ENCODE measurements at regions of chr16 and their contacts with region 1.

Region 1: DNA sequence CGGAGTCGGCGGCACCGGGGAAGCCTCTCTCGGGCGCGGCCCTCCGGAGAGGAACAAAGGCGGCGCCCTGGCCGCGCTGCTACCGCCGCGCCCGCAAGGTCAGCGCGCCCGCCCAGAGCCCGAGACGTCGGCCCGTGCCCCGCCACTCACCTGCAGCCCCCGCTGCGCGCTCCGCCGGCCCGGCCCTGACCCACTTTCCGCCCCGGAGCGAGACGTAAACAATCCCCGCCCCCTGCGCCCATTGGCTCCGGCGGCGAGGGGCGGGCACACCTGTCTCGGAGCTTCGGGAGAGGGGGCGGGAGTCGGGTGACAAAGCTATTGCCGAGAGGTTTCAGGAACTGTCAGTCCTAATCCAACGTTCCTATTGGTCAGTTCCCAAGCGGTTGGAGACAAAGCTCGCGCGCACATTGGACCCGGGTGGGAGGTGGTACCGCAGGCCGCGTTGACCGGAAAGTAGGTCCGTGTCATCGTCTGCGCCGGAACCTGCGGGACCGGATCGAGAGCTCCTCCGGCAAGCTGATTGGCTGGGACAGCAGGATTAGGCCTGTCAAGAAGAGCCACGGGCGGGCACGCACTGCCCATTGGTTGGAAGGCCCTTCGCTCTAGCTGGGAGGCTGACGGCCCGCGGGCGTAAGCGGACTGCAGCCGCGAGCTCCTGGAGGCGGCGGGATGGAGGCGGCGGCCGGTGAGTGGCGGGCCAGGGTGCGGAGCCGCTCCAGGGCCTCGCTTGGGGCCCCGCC is at the starts of genes NUBP2 and SPSB3:
- DNase-seq: peak; percentile 100
- H3K4me3 ChIP-seq: peak within 1 kb of the TSS; percentile 66 to 94 (median 85)
- H3K4me3 Mint-ChIP-seq: peak within 1 kb of the TSS; percentile 87 to 93
- H3K27ac ChIP-seq: peak within 1 kb of the TSS; percentile 52 to 83
- H3K27ac Mint-ChIP-seq: peak within 1 kb of the TSS; percentile 82 to 95 (median 86)
- H3K4me1 ChIP-seq: peaks cover 25 to 33% of the 10 kb centered on the region in 2 donors
- H3K4me1 Mint-ChIP-seq: peaks cover 27% of the 10 kb centered on the region
- H3K27me3 ChIP-seq: no peaks in the 10 kb centered on the region
- H3K27me3 Mint-ChIP-seq: no peaks in the 10 kb centered on the region
- CTCF ChIP-seq: no peak
- polyA plus RNA-seq, gene NUBP2: 34.4 to 69.5 (median 57.9) TPM
- polyA plus RNA-seq, gene SPSB3: 36.8 to 151 (median 40.2) TPM

Region 2: GRCh38 chr16:1428511-1428910 is 354.0 kb before region 1 on chr16:
- intact Hi-C with region 1: loop called in 1 of 2 experiments (anchors 10 kb)
- DNase-seq: peak; percentile 34 to 51 (median 38)
- H3K4me3 ChIP-seq: no peak overlapping the region
- H3K4me3 Mint-ChIP-seq: peak overlapping the region; percentile 27 to 67
- H3K27ac ChIP-seq: no peak overlapping the region
- H3K27ac Mint-ChIP-seq: no peak overlapping the region
- H3K4me1 ChIP-seq: peaks cover 5 to 20% of the 10 kb centered on the region in 2 donors
- H3K4me1 Mint-ChIP-seq: peaks cover 3% of the 10 kb centered on the region
- H3K27me3 ChIP-seq: peaks cover 0 to 24% of the 10 kb centered on the region in 2 donors
- H3K27me3 Mint-ChIP-seq: peaks cover 7 to 34% (median 7%) of the 10 kb centered on the region in 3 donors
- CTCF ChIP-seq: peak; percentile 80

Region 3: DNA sequence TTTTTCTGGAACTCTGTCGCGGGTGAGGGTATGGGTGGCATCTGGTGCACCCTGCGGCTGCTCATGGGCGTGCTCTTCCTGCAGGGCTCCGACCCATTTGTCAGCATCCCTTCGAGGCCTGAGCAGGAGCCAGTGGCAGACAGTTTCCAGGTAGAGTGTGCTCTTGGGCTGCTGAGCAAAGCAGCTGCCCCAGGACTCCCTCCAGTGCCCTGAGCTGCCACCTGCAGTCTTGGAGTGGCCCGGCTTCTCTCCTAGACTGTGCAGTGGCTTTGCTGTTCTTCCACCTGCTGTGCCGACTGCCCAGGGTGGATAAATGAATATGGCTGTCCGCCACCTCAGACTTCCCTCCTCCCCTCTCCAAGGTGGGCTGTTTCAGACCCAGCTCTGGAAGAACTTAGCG is 115.3 kb before region 1 on chr16:
- intact Hi-C with region 1: no loop called
- DNase-seq: no peak
- H3K4me3 ChIP-seq: no peak overlapping the region
- H3K4me3 Mint-ChIP-seq: no peak overlapping the region
- H3K27ac ChIP-seq: no peak overlapping the region
- H3K27ac Mint-ChIP-seq: no peak overlapping the region
- H3K4me1 ChIP-seq: no peaks in the 10 kb centered on the region
- H3K4me1 Mint-ChIP-seq: no peaks in the 10 kb centered on the region
- H3K27me3 ChIP-seq: no peaks in the 10 kb centered on the region
- H3K27me3 Mint-ChIP-seq: peaks cover 0 to 1% (median 1%) of the 10 kb centered on the region in 3 donors
- CTCF ChIP-seq: no peak

Region 4: DNA sequence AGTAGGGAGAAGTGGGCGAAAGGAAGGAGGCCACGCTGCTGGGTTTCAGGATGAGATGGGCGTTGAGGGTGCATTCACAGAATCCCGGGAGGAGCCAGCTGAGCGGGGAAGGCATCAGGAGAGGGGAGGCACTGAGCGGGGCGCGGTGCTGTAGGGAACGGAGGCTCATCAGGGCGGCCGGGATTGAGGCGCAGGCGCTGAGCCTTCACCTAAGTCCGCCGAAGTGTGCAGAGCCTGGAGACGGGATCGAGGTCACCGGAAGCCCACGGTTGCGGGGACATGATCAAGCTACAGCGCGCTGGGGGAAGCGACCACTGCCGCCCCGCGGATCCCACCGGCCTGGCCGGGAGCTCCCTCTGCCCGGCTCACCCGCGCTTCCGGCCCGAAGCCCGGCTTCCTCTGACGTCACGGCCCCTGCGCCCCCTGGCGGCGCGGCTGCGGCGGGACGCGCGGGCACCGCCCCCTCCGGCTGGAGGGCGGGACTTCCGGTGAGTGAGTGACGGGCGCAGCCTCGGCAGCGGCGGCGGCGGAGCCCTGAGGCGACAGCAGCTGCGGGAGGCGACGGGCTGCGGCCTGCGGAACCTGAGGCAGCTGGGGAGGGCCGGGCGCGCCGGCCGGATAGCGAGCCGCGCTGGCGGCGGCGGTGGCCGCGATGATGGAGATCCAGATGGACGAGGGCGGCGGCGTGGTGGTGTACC is 76.7 kb before region 1 on chr16 and contains the start of gene MAPK8IP3:
- intact Hi-C with region 1: loop called (anchors 10 kb)
- DNase-seq: peak; percentile 86 to 92 (median 87)
- H3K4me3 ChIP-seq: peak within 1 kb of the TSS; percentile 94 to 97 (median 96)
- H3K4me3 Mint-ChIP-seq: peak within 1 kb of the TSS; percentile 96 to 99
- H3K27ac ChIP-seq: peak within 1 kb of the TSS; percentile 72 to 94
- H3K27ac Mint-ChIP-seq: peak within 1 kb of the TSS; percentile 91 to 100 (median 98)
- H3K4me1 ChIP-seq: peaks cover 22 to 26% of the 10 kb centered on the region in 2 donors
- H3K4me1 Mint-ChIP-seq: peaks cover 37% of the 10 kb centered on the region
- H3K27me3 ChIP-seq: no peaks in the 10 kb centered on the region
- H3K27me3 Mint-ChIP-seq: no peaks in the 10 kb centered on the region
- CTCF ChIP-seq: peak; percentile 95
- polyA plus RNA-seq, gene MAPK8IP3: 1.1 to 185 (median 2.1) TPM

Region 5: DNA sequence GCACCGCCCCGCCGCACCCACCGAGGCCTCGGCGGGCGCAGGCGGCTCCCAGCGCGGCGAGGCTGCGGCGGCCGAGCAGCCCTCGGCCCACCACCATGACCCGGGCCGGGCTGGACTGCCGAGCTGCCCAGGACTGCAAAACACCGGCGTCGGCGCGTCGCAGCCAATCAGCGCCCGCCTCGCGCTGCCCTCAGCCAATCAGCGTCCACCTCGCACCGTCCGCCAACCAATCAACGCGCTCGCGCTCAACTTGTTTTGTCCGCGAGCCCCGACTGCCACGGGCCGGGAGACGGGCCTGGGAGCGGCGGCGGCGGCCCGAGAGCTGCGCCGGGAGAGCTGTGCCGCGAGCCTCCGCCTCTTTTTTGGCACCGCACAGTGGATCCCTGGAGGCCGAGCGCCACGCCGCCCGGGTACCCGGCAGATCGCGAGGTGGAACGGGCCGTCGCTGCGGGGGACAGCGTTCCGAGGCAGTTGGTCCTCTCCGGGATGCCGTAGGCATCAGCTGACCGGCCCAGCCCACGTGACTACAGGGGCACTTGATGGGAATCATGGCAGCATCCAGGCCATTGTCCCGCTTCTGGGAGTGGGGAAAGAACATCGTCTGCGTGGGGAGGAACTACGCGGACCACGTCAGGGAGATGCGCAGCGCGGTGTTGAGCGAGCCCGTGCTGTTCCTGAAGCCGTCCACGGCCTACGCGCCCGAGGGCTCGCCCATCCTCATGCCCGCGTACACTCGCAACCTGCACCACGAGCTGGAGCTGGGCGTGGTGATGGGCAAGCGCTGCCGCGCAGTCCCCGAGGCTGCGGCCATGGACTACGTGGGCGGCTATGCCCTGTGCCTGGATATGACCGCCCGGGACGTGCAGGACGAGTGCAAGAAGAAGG is 44.4 kb after region 1 on chr16 and contains the starts of genes FAHD1 and HAGH:
- intact Hi-C with region 1: loop called (anchors 2 to 5 kb)
- DNase-seq: peak; percentile 92 to 95 (median 92)
- H3K4me3 ChIP-seq: peak within 1 kb of the TSS; percentile 54 to 91 (median 74)
- H3K4me3 Mint-ChIP-seq: peak within 1 kb of the TSS; percentile 94 to 95
- H3K27ac ChIP-seq: peak within 1 kb of the TSS; percentile 49 to 85
- H3K27ac Mint-ChIP-seq: peak within 1 kb of the TSS; percentile 85 to 93 (median 90)
- H3K4me1 ChIP-seq: peaks cover 22 to 39% of the 10 kb centered on the region in 2 donors
- H3K4me1 Mint-ChIP-seq: peaks cover 31% of the 10 kb centered on the region
- H3K27me3 ChIP-seq: no peaks in the 10 kb centered on the region
- H3K27me3 Mint-ChIP-seq: peaks cover 0 to 3% (median 0%) of the 10 kb centered on the region in 3 donors
- CTCF ChIP-seq: no peak
- polyA plus RNA-seq, gene FAHD1: 7.5 to 24.9 (median 17.3) TPM
- polyA plus RNA-seq, gene HAGH: 42.6 to 82.1 (median 47.7) TPM

Region 6: DNA sequence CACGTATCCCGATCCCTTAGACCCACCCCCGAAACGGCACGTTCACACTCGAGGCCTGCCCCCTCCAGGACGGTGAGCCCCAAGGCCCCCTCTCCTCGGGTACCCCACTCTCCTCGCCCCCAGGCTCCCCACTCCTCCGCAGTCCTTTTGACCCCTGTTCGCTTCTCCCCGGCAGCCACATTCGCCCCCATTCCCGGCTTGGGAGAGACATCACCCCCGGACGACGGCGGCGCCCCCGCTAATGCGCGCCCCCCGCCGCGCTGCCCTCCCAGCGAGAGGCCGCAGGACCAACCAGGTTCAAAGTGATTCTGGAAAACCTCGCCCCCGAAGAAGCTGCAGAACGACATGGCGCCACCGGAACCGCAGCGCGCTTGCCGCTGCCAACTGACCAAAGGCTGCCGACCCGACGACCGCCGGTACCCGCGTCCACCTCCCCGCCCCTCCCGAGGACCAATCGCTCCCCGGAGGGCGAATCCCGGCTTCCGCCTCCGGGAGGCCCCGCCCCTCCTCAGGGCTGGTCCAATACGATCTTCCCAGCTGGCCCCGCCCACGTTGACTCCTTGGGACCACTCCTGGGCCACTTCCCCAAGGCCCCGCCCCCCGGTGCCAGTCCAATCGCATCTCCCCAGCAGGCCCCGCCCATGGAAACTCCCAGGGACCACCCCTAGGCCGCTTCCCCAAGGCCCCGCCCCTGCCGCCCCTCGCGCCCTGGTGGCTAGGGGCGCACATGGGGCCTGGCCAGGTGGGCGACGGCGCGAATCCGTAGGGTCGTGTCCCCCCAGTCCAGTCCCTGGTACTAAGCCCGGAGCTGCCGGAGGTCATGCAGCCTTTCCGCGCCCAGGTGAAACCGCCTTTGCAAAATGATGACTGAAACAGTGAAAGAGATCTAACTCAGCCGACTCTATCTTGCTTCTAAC is 160.5 kb after region 1 on chr16 and contains the start of gene MSRB1:
- intact Hi-C with region 1: loop called (anchors 2 to 10 kb)
- DNase-seq: peak; percentile 98 to 99 (median 98)
- H3K4me3 ChIP-seq: peak within 1 kb of the TSS; percentile 86 to 99 (median 92)
- H3K4me3 Mint-ChIP-seq: peak within 1 kb of the TSS; percentile 89 to 91
- H3K27ac ChIP-seq: peak within 1 kb of the TSS; percentile 83
- H3K27ac Mint-ChIP-seq: peak within 1 kb of the TSS; percentile 85 to 95 (median 94)
- H3K4me1 ChIP-seq: peaks cover 53 to 60% of the 10 kb centered on the region in 2 donors
- H3K4me1 Mint-ChIP-seq: peaks cover 51% of the 10 kb centered on the region
- H3K27me3 ChIP-seq: no peaks in the 10 kb centered on the region
- H3K27me3 Mint-ChIP-seq: peaks cover 0 to 3% (median 2%) of the 10 kb centered on the region in 3 donors
- CTCF ChIP-seq: no peak
- polyA plus RNA-seq, gene MSRB1: 116 to 427 (median 416) TPM

Region 7: DNA sequence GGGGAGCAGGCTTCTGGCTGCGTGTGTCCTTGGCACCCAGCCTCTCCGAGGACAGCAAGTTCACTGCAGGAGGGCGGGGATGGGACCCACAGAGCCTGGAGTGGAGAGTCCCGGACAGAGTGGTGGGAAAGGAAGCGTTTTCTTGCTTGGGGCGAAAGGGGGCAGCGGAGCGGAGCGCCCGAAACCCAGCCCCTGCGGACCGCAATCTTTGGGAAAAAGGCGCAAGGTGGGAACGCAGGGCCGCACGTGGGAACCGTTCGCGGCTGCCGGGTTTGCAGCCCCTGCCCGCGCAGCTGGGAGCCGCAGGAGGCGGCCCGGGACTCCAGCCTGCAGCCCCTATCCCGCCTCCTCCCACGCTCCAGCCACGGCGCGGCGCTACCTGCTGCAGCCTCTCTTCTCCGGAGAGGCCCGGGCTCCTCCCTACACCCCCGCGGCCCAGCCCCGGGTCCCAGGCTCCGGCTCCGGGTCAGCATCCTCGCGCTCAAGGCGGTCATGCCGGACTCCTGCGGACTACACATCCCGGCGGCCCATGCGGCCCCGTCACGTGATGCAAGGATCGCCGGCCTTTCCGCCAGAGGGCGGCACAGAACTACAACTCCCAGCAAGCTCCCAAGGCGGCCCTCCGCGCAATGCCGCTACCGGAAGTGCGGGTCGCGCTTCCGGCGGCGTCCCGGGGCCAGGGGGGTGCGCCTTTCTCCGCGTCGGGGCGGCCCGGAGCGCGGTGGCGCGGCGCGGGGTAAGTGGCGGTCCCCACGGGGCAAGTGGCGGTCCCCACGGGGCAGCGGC is 265.0 kb after region 1 on chr16 and contains the starts of genes NTHL1 and TSC2:
- intact Hi-C with region 1: loop called in 1 of 2 experiments (anchors 5 kb)
- DNase-seq: peak; percentile 91 to 93 (median 93)
- H3K4me3 ChIP-seq: peak within 1 kb of the TSS; percentile 66 to 96 (median 82)
- H3K4me3 Mint-ChIP-seq: peak within 1 kb of the TSS; percentile 90 to 93
- H3K27ac ChIP-seq: peak within 1 kb of the TSS in 1 of 2 donors; percentile 77
- H3K27ac Mint-ChIP-seq: peak within 1 kb of the TSS; percentile 38 to 92 (median 82)
- H3K4me1 ChIP-seq: peaks cover 26 to 37% of the 10 kb centered on the region in 2 donors
- H3K4me1 Mint-ChIP-seq: peaks cover 27% of the 10 kb centered on the region
- H3K27me3 ChIP-seq: no peaks in the 10 kb centered on the region
- H3K27me3 Mint-ChIP-seq: peaks cover 0 to 2% (median 0%) of the 10 kb centered on the region in 3 donors
- CTCF ChIP-seq: peak; percentile 56
- polyA plus RNA-seq, gene NTHL1: 9.2 to 22.4 (median 9.6) TPM
- polyA plus RNA-seq, gene TSC2: 11.7 to 95.1 (median 20.8) TPM